Activated CD8-positive, alpha-beta memory T cell treated with anti-CD3 and anti-CD28 coated beads, Interleukin-2, amount 10 ng/mL, durations not matched to agents 7 days and 5 days (primary cell): ENCODE measurements at regions of chr19 and their contacts with region 1.

Region 1: GRCh38 chr19:16572332-16573211 is at the start of gene SLC35E1:
- DNase-seq: peak; percentile 95
- ATAC-seq: peak; percentile 94
- H3K4me3 Mint-ChIP-seq: peak within 1 kb of the TSS; percentile 94
- H3K27ac Mint-ChIP-seq: peak within 1 kb of the TSS; percentile 89
- H3K4me1 Mint-ChIP-seq: peaks cover 64% of the 10 kb centered on the region
- H3K27me3 Mint-ChIP-seq: no peaks in the 10 kb centered on the region
- total RNA-seq, gene SLC35E1: 46.2 to 46.3 TPM

Region 2: DNA sequence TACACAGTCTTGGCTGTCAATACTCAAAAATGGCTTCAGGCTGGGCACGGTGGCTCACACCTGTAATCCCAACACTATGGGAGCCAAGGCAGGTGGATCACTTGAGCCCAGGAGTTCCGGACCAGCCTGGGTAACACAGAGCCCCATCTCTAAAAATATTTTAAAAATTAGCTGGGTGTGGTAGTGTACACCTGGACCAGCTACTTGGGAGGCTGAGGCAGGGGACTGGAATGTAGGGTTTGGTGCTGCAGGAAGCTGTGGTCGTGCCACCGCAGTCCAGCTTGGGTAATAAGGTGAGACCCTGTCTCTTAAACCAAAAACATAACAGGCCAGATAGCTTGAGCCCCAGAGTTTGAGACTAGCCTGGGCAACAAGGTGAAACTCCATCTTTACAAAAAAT is 23.6 kb before region 1 on chr19:
- CTCF ChIA-PET with region 1: no interaction called
- DNase-seq: no peak
- ATAC-seq: no peak
- H3K4me3 Mint-ChIP-seq: no peak overlapping the region
- H3K27ac Mint-ChIP-seq: peak overlapping the region; percentile 43
- H3K4me1 Mint-ChIP-seq: peaks cover 45% of the 10 kb centered on the region
- H3K27me3 Mint-ChIP-seq: no peaks in the 10 kb centered on the region

Region 3: DNA sequence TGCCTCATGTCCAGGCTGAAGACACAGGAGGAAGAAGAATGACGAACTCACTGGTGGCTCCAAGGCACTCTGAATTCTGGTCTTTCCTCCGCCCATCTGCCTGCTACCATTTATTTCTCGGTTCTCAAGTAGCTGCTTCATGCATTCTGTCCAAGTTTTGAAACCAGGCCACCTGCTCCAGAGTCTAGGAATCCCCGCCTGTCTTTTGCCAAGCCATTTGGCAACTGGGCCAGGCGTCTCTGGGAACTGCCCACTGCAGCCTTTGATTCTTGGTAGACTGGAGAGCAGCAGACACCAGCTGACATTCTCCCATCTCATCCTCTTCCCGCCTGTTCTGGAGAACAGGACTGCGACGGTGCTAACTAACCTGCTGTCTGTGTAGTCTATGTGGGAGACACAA is 11.2 kb before region 1 on chr19:
- CTCF ChIA-PET with region 1: interaction called, 11 read pairs
- DNase-seq: no peak
- ATAC-seq: no peak
- H3K4me3 Mint-ChIP-seq: no peak overlapping the region
- H3K27ac Mint-ChIP-seq: peak overlapping the region; percentile 43
- H3K4me1 Mint-ChIP-seq: peaks cover 28% of the 10 kb centered on the region
- H3K27me3 Mint-ChIP-seq: no peaks in the 10 kb centered on the region

Region 4: GRCh38 chr19:16587833-16588823 is 15.6 kb after region 1 on chr19:
- CTCF ChIA-PET with region 1: interaction called, 13 read pairs
- DNase-seq: peak; percentile 85
- ATAC-seq: peak; percentile 52
- H3K4me3 Mint-ChIP-seq: peak overlapping the region; percentile 81
- H3K27ac Mint-ChIP-seq: peak overlapping the region; percentile 94
- H3K4me1 Mint-ChIP-seq: peaks cover 94% of the 10 kb centered on the region
- H3K27me3 Mint-ChIP-seq: no peaks in the 10 kb centered on the region

Region 5: DNA sequence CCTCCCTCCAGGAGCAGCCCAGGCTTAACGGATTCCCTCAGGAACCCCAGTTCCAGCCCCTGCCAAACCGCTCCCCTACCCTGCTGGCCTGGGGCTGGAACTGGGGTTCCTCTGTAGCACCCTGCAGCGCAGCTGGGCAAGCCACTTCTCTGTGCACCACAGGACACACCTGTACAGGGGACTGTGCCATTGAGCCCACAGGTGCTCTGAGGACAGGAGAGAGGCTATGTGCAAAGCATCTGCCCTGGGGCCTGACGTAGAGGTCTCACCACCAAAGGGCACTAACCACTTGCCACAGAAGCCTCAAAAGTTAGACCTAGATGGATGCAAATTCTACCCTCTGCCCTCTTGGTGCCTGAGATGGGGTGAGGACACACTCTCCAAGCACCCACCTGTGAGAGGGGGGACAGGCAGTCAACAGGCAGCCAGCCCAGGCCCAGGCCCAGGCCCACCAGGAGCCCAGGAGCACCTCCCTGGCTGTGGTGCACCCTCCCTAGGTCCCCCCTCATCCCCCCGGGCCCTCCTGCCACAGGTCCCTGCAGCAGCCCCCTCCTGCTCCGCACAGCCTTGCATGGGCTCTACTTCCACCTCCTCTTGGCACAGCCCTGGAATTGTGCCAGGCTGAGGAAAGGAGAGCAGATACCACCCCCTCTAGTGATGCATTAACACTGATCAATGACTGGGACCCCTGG is 27.2 kb after region 1 on chr19:
- CTCF ChIA-PET with region 1: no interaction called
- DNase-seq: no peak
- ATAC-seq: no peak
- H3K4me3 Mint-ChIP-seq: no peak overlapping the region
- H3K27ac Mint-ChIP-seq: no peak overlapping the region
- H3K4me1 Mint-ChIP-seq: peaks cover 36% of the 10 kb centered on the region
- H3K27me3 Mint-ChIP-seq: no peaks in the 10 kb centered on the region